ENCODE measurements at regions of chr3 and their contacts with region 1.

Region 1: DNA sequence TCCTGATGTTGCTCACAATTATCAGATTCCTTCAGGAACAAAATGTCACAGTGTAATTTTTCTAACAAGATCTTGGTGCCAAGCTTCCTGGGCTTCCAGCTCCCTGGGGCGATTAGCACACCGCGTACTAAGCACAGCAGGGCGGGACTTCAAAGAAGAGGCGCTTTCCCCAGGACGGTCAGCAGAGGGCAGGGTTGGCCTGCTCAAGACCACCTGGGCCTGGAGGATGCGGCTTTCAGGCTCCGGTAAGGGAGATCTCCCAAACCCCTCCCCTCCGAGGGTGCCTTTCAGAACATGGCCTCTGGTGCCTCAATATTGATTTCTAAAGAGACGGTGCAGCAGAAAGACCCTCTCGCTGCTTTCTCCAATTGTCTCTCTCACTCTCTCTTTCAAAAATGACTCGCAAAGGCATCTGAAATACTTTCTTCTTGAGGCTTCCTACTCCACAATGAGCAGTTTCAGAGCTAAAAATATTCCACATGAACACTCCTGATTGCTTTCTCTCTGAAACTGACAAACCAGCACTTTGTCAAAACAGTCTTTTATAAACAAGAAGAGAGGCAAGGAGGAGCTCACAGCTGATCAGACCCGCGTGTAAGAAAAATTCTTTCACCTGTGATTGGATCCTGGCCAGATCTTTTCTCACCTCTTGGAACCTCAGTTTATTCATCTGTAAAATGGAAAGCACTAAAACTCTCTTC is 154.0 kb downstream of the ADAMTS9 start:
- DNase-seq: peak; percentile 84
- H3K4me3 ChIP-seq: no peak overlapping the region
- H3K27ac ChIP-seq: no peak overlapping the region
- H3K4me1 ChIP-seq: no peaks in the 10 kb centered on the region
- H3K27me3 ChIP-seq: no peaks in the 10 kb centered on the region
- CTCF ChIP-seq: peak; percentile 72

Region 2: GRCh38 chr3:64141493-64141892 is 392.3 kb before region 1 on chr3:
- CTCF ChIA-PET with region 1: no interaction called
- POLR2A ChIA-PET with region 1: no interaction called
- intact Hi-C with region 1: no loop called
- DNase-seq: no peak
- H3K4me3 ChIP-seq: no peak overlapping the region
- H3K27ac ChIP-seq: no peak overlapping the region
- H3K4me1 ChIP-seq: no peaks in the 10 kb centered on the region
- H3K27me3 ChIP-seq: peaks cover 3% of the 10 kb centered on the region
- CTCF ChIP-seq: no peak

Region 3: GRCh38 chr3:64601824-64602223 is 68.1 kb after region 1 on chr3:
- CTCF ChIA-PET with region 1: no interaction called
- POLR2A ChIA-PET with region 1: interaction called, 16 read pairs
- intact Hi-C with region 1: no loop called
- DNase-seq: no peak
- H3K4me3 ChIP-seq: no peak overlapping the region
- H3K27ac ChIP-seq: no peak overlapping the region
- H3K4me1 ChIP-seq: no peaks in the 10 kb centered on the region
- H3K27me3 ChIP-seq: no peaks in the 10 kb centered on the region
- CTCF ChIP-seq: no peak

Region 4: GRCh38 chr3:65168547-65168946 is 634.8 kb after region 1 on chr3:
- CTCF ChIA-PET with region 1: no interaction called
- POLR2A ChIA-PET with region 1: no interaction called
- intact Hi-C with region 1: loop called (anchors 5 kb)
- DNase-seq: peak; percentile 53
- H3K4me3 ChIP-seq: no peak overlapping the region
- H3K27ac ChIP-seq: no peak overlapping the region
- H3K4me1 ChIP-seq: no peaks in the 10 kb centered on the region
- H3K27me3 ChIP-seq: peaks cover 7% of the 10 kb centered on the region
- CTCF ChIP-seq: no peak

Region 5: DNA sequence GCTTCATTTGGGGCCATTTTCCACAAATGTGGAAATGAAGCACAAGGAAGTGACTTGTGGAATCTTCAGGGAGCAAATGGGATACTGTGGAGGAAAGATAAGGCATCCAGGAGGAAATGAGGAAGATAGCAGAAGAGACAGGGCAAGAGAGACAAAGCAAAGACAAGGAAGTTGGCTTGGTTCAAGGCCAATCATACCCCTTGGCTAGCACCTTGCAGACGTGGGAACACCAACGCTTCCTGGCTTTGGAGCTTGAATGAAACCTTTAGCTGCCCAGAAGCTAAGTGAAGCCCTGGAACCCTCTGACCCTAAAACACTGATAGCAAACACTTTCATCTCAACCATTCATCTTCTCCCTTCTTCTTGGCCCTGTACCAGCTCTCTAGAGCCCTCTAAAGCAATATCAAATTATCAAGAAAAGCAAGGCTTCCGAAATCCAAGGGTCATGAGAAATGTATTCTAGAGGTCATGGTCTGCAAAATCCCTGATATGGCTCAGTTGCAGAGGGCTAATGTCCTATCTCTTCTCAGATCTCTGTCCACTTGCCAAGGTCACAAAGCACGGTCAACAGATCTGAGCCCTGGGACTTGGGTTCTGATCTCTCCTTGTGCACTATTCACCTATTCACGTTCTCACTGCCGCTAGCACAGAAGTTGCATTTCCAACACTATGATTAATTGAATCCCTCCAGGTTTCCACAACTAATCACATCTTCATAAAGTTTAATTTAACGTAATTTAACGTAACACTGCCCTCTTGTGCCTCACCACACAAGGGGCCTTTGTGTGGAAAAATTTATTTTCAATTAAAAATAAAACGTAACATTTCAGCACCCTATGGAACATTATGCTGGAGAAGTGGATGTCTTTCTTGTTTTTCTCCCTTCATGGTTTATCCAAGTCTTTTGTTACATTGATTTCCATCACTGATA is 711.6 kb after region 1 on chr3:
- CTCF ChIA-PET with region 1: no interaction called
- POLR2A ChIA-PET with region 1: no interaction called
- intact Hi-C with region 1: loop called (anchors 5 kb)
- DNase-seq: peak; percentile 2
- H3K4me3 ChIP-seq: no peak overlapping the region
- H3K27ac ChIP-seq: no peak overlapping the region
- H3K4me1 ChIP-seq: no peaks in the 10 kb centered on the region
- H3K27me3 ChIP-seq: no peaks in the 10 kb centered on the region
- CTCF ChIP-seq: peak; percentile 30; the same call in 1 of the 2 replicates

Region 6: GRCh38 chr3:65439641-65440284 is 906.0 kb after region 1 on chr3:
- CTCF ChIA-PET with region 1: no interaction called
- POLR2A ChIA-PET with region 1: no interaction called
- intact Hi-C with region 1: loop called (anchors 5 kb)
- DNase-seq: peak; percentile 52
- H3K4me3 ChIP-seq: no peak overlapping the region
- H3K27ac ChIP-seq: no peak overlapping the region
- H3K4me1 ChIP-seq: peaks cover 9% of the 10 kb centered on the region
- H3K27me3 ChIP-seq: no peaks in the 10 kb centered on the region
- CTCF ChIP-seq: peak; percentile 30